T-cell (primary cell): ENCODE measurements at regions of chr10 and their contacts with region 1.

Region 1: DNA sequence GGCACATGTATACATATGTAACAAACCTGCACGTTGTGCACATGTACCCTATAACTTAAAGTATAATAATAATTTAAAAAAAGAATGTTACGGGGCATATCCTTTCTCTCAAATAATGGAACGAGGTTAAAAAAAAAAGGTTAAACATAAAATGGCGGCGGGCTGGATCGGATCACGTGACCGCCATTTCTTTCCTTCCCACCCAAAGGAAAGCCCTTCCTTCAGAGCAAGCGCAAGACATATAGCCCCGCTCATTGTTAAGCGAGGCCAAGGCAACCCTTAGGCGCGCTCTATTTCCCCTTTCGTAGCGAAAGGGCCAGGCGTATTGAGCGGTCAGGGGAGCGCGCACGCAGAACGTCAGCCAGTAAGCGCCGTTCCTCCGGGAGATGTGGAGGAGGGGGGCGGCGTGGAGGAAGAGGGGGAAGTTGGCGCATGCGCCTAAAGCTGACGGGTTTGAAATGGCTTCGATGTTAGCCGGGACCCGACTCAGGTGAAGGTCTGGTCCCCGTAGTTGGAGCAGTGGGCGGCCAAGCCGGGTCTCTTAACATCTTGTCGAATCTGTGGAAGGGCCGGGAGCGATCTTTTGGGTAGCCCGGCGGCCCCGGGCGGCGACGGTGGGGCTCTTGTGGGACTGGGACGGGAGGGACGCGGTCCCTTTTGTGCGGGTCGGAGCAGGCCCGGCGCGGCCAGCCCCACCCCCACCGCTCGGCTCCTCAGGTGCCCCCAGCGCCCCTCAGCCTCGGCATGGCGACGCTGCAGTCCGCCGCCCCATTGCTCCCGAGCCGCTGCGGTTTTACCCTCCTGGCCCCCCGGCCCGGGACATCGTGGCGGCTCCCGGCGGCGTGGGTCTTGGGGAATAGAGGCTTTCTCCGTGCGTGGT is at the start of gene CCAR1:
- DNase-seq: peak; percentile 89 to 99 (median 96)
- ATAC-seq: peak; percentile 97 to 99 (median 98)
- H3K4me3 ChIP-seq: peak within 1 kb of the TSS; percentile 92 to 99
- H3K4me3 Mint-ChIP-seq: peak within 1 kb of the TSS; percentile 94 to 96 (median 96)
- H3K27ac ChIP-seq: peak within 1 kb of the TSS; percentile 87
- H3K27ac Mint-ChIP-seq: peak within 1 kb of the TSS; percentile 96 to 98
- H3K4me1 ChIP-seq: peaks cover 8 to 19% of the 10 kb centered on the region in 2 experiments
- H3K4me1 Mint-ChIP-seq: peaks cover 16 to 19% (median 18%) of the 10 kb centered on the region in 3 donors
- H3K27me3 ChIP-seq: peaks cover 0 to 3% of the 10 kb centered on the region in 2 experiments
- H3K27me3 Mint-ChIP-seq: no peaks in the 10 kb centered on the region
- total RNA-seq, gene CCAR1: 73.1 to 91.1 (median 76.6) TPM

Region 2: DNA sequence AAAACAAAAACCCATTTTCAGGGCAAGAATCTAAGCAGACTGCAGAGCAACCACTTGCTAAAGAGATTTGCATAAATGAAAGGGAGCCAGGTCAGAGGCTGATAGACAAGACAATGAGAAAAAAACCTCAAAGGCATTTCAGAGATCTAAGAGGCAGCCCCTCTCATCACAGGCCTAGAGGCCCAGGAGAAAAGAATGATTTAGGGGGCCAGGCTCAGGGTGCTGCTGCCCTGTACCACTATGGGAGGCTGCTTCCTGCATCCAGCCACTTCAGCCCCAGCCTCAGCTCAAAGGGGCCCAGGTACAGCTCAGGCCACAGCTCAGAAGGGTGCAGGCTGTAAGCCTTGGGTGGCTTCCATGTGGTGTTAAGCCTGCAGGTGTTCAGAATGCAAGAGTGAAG is 879.3 kb before region 1 on chr10:
- CTCF ChIA-PET with region 1: interaction called in 1 of 2 experiments, 10 read pairs
- POLR2A ChIA-PET with region 1: no interaction called
- DNase-seq: no peak
- ATAC-seq: no peak
- H3K4me3 ChIP-seq: no peak overlapping the region
- H3K4me3 Mint-ChIP-seq: no peak overlapping the region
- H3K27ac ChIP-seq: no peak overlapping the region
- H3K27ac Mint-ChIP-seq: no peak overlapping the region
- H3K4me1 ChIP-seq: no peaks in the 10 kb centered on the region
- H3K4me1 Mint-ChIP-seq: peaks cover 0 to 5% (median 4%) of the 10 kb centered on the region in 3 donors
- H3K27me3 ChIP-seq: no peaks in the 10 kb centered on the region
- H3K27me3 Mint-ChIP-seq: no peaks in the 10 kb centered on the region

Region 3: GRCh38 chr10:68705548-68705947 is 15.5 kb before region 1 on chr10:
- CTCF ChIA-PET with region 1: no interaction called
- POLR2A ChIA-PET with region 1: no interaction called
- DNase-seq: no peak
- ATAC-seq: no peak
- H3K4me3 ChIP-seq: no peak overlapping the region
- H3K4me3 Mint-ChIP-seq: no peak overlapping the region
- H3K27ac ChIP-seq: no peak overlapping the region
- H3K27ac Mint-ChIP-seq: no peak overlapping the region
- H3K4me1 ChIP-seq: no peaks in the 10 kb centered on the region
- H3K4me1 Mint-ChIP-seq: no peaks in the 10 kb centered on the region
- H3K27me3 ChIP-seq: peaks cover 0 to 8% of the 10 kb centered on the region in 2 experiments
- H3K27me3 Mint-ChIP-seq: no peaks in the 10 kb centered on the region